Activated CD8-positive, alpha-beta T cell treated with anti-CD3 and anti-CD28 coated beads, Interleukin-2, amount 10 ng/mL, durations not matched to agents 7 days and 5 days (primary cell): ENCODE measurements at regions of chr20 and their contacts with region 1.

Region 1: DNA sequence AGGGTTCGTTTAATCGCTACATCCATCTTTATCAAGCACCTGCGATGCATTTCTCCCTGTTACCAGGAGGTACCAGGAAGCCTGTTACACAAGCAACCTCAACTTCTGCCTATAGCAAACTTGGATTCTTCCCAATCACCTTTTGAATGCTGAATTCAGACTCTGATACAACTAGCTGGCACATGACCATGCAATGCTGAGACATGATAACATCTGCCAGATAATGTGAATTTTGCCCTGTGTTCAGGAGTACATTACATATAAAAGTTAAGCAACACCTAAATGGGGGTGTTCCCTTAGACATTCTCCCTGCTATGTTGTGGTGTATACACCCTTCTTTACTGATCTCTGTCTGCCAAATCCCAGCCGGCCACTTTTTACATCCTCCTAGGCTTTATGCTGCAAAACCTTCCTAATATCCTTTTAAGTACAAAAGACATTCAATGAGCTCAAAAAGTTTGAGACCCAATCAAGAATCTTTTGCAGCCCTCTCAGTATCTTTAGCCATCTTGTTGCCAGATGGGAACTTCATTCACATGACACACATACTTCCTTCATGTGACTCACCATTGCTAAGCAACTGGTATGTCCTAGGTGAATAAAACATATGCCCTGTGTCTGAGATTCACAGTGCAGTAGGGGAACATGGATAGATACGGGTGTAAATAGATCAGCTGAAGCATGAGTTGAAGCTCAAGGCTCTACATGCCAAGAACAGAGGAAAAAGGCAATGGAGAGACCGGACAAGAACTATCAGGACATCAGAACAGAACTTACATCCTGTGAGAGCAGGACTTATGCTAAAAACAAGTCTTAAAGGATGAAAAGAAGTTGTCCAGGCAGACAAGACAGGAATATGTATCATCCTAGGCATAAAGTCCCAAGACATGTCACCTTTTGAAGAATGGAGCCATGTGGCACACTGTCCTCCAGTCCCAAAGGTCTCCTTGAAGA is 84.3 kb downstream of the ZHX3 start:
- DNase-seq: no peak
- ATAC-seq: no peak
- H3K4me3 Mint-ChIP-seq: no peak overlapping the region
- H3K27ac Mint-ChIP-seq: no peak overlapping the region
- H3K4me1 Mint-ChIP-seq: peaks cover 38% of the 10 kb centered on the region
- H3K27me3 Mint-ChIP-seq: no peaks in the 10 kb centered on the region

Region 2: DNA sequence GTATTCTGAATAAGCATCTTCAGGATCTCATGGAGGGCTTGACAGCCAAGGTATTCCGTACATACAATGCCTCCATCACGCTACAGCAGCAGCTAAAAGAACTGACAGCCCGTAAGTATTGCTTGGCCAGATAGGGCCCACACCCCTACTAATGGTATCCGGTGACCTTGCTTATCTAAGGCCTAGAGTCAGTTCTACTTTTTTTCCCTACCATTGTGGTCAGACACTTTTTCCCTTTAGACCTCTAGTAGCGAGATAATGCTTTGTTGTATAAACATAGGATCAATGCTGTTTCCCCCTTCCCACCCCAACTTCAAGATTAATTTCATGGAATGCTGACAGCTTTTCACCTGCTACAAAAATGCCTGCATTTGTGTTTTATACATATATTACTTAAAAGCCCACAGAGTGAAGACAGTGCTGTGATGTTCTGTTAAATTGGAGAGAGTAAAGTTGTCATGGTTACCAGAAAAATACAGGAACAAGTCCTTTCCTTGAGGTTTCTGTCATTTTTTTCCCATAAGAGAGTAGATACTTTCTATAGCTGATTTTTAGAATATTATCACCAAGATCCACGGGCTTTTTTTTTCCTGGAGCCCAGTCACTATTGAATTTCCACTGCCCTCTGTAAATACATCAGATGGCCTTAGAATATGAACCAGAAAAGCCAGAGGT is 116.8 kb before region 1 on chr20:
- CTCF ChIA-PET with region 1: no interaction called
- POLR2A ChIA-PET with region 1: no interaction called
- DNase-seq: no peak
- ATAC-seq: no peak
- H3K4me3 Mint-ChIP-seq: no peak overlapping the region
- H3K27ac Mint-ChIP-seq: no peak overlapping the region
- H3K4me1 Mint-ChIP-seq: peaks cover 12% of the 10 kb centered on the region
- H3K27me3 Mint-ChIP-seq: no peaks in the 10 kb centered on the region

Region 3: DNA sequence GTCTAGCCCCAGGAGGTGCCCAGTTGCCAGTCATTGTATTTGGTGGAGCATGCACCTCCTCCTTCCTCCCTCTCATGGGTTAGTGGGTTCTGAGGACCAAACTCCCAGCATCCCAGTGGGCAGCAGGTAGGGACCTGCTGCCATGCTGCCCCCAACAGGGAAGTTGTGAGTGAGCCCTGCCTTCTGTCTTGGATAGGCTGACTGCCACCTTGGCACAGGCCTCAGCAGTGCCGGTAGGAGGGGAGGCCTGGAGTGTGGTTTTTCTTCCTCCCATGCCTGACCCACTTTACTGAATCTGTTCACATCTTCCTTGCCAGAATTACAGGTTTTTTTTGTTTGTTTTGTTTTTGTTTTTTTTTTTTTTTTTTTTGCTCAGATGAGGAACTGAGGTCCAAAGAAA is 71.4 kb before region 1 on chr20:
- CTCF ChIA-PET with region 1: interaction called, 18 read pairs
- POLR2A ChIA-PET with region 1: interaction called, 8 read pairs
- DNase-seq: no peak
- ATAC-seq: no peak
- H3K4me3 Mint-ChIP-seq: no peak overlapping the region
- H3K27ac Mint-ChIP-seq: peak overlapping the region; percentile 71
- H3K4me1 Mint-ChIP-seq: peaks cover 92% of the 10 kb centered on the region
- H3K27me3 Mint-ChIP-seq: no peaks in the 10 kb centered on the region

Region 4: GRCh38 chr20:41196653-41197225 is 36.5 kb before region 1 on chr20:
- CTCF ChIA-PET with region 1: interaction called, 14 read pairs
- POLR2A ChIA-PET with region 1: no interaction called
- DNase-seq: no peak
- ATAC-seq: no peak
- H3K4me3 Mint-ChIP-seq: no peak overlapping the region
- H3K27ac Mint-ChIP-seq: no peak overlapping the region
- H3K4me1 Mint-ChIP-seq: peaks cover 15% of the 10 kb centered on the region
- H3K27me3 Mint-ChIP-seq: no peaks in the 10 kb centered on the region

Region 5: GRCh38 chr20:41218466-41218865 is 14.8 kb before region 1 on chr20:
- CTCF ChIA-PET with region 1: interaction called, 25 read pairs
- POLR2A ChIA-PET with region 1: no interaction called
- DNase-seq: no peak
- ATAC-seq: no peak
- H3K4me3 Mint-ChIP-seq: no peak overlapping the region
- H3K27ac Mint-ChIP-seq: no peak overlapping the region
- H3K4me1 Mint-ChIP-seq: no peaks in the 10 kb centered on the region
- H3K27me3 Mint-ChIP-seq: peaks cover 3% of the 10 kb centered on the region